ENCODE measurements at regions of chr6 and their contacts with region 1.

Region 1: GRCh38 chr6:110039364-110039980 is 61.4 kb downstream of the GPR6 start:
- DNase-seq: peak; percentile 88
- H3K4me3 Mint-ChIP-seq: peak overlapping the region; percentile 72
- H3K27ac Mint-ChIP-seq: peak overlapping the region; percentile 63
- H3K4me1 Mint-ChIP-seq: peaks cover 20% of the 10 kb centered on the region
- H3K27me3 Mint-ChIP-seq: no peaks in the 10 kb centered on the region

Region 2: GRCh38 chr6:109382576-109383437 is 656.7 kb before region 1 on chr6:
- CTCF ChIA-PET with region 1: interaction called, 7 read pairs
- POLR2A ChIA-PET with region 1: interaction called, 14 read pairs
- DNase-seq: peak; percentile 94
- H3K4me3 Mint-ChIP-seq: peak overlapping the region; percentile 93
- H3K27ac Mint-ChIP-seq: peak overlapping the region; percentile 99
- H3K4me1 Mint-ChIP-seq: peaks cover 28% of the 10 kb centered on the region
- H3K27me3 Mint-ChIP-seq: peaks cover 3% of the 10 kb centered on the region

Region 3: DNA sequence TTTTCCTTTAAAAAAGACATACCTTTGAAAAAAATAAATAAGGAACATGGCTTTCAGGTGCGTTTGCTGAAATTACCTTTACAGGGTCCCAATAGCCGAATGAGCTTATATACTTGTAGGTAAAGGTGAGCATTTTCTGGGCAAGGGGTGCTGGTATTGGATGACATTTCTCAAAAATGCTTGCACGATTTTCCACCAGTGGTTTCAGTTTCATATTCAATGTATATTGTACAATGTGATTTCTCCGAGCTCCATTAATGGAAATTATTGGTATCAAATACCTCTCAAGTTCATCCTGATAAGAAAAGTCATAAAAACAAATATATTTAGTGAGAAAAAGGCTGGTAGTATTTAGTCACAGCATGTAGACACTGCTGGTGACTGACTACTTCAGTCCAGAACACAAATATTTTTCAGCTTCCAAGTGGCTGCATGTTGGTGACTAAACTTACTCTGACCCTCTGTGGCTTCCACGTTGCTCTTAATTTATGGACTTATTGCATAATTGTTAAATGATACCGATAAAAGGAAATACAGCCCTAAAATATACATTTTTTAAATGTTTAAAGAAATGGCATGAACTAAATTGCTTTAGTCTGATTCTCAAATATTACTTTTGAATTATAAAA is 523.6 kb before region 1 on chr6:
- CTCF ChIA-PET with region 1: interaction called, 13 read pairs
- POLR2A ChIA-PET with region 1: interaction called, 4 read pairs
- DNase-seq: no peak
- H3K4me3 Mint-ChIP-seq: peak overlapping the region; percentile 59
- H3K27ac Mint-ChIP-seq: peak overlapping the region; percentile 33
- H3K4me1 Mint-ChIP-seq: peaks cover 35% of the 10 kb centered on the region
- H3K27me3 Mint-ChIP-seq: no peaks in the 10 kb centered on the region

Region 4: DNA sequence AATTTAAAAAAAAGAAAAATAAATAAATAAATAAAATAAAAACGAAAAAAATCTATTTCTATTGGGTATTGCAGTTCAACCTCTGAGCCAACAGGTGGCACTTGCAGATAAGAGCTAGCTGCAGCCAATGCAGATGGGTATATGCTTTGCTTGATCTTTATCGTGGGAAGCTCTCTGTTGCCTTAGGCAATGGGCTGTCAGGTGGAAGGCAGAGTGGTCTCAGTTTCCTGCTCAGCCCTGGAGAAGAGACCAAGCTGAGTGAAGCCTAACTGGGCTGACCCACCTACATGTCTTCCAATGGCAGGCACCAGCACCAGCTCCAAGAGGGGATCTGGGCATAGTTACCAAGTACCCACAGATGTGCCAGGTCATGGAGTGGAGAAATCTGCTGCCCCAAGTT is 443.5 kb before region 1 on chr6:
- CTCF ChIA-PET with region 1: interaction called, 15 read pairs
- POLR2A ChIA-PET with region 1: no interaction called
- DNase-seq: no peak
- H3K4me3 Mint-ChIP-seq: no peak overlapping the region
- H3K27ac Mint-ChIP-seq: no peak overlapping the region
- H3K4me1 Mint-ChIP-seq: no peaks in the 10 kb centered on the region
- H3K27me3 Mint-ChIP-seq: peaks cover 2% of the 10 kb centered on the region

Region 5: DNA sequence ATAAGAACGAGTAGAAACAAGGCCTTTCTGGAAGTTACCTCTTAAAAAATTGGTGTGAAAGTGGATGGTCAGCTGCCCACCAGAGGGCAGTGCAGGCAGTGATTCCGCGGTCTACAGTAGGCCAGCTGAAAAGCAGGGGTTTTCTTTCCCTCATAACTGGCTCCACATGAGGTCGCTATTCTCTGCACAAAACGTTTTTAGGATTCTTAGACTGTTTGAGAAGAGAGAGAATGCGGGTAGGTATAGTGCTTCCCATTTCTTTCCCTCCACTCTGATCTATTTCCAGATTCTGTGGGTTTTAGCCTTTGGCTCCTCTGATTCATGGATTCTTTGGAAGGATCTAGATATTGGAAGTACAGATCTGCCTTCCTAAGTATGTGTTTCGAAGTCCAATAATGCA is 334.2 kb before region 1 on chr6:
- CTCF ChIA-PET with region 1: interaction called, 142 read pairs
- POLR2A ChIA-PET with region 1: no interaction called
- DNase-seq: peak; percentile 81
- H3K4me3 Mint-ChIP-seq: no peak overlapping the region
- H3K27ac Mint-ChIP-seq: no peak overlapping the region
- H3K4me1 Mint-ChIP-seq: peaks cover 7% of the 10 kb centered on the region
- H3K27me3 Mint-ChIP-seq: no peaks in the 10 kb centered on the region

Region 6: DNA sequence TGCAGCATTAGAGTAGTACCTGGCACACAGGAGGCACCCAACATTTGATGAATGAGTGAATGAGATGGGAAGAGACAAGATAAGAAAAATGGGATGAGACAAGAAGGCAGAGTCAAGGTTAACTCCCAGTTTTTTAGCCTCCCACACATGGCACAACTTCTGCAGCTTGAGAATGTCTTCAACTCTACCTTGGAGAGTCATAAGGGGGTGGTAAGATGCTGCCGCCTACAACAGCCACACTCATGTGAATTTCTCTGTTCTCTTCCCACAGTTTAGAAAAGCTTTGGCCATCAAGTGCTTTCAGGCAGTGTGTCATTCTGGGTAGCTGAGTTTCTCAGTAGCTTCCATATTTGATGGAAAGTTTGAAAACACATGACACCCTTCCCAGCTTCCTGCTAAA is 80.8 kb before region 1 on chr6:
- CTCF ChIA-PET with region 1: no interaction called
- POLR2A ChIA-PET with region 1: no interaction called
- DNase-seq: no peak
- H3K4me3 Mint-ChIP-seq: no peak overlapping the region
- H3K27ac Mint-ChIP-seq: no peak overlapping the region
- H3K4me1 Mint-ChIP-seq: no peaks in the 10 kb centered on the region
- H3K27me3 Mint-ChIP-seq: peaks cover 10% of the 10 kb centered on the region

Region 7: GRCh38 chr6:110020888-110021287 is 18.6 kb before region 1 on chr6:
- CTCF ChIA-PET with region 1: interaction called, 16 read pairs
- POLR2A ChIA-PET with region 1: no interaction called
- DNase-seq: no peak
- H3K4me3 Mint-ChIP-seq: no peak overlapping the region
- H3K27ac Mint-ChIP-seq: no peak overlapping the region
- H3K4me1 Mint-ChIP-seq: peaks cover 12% of the 10 kb centered on the region
- H3K27me3 Mint-ChIP-seq: peaks cover 3% of the 10 kb centered on the region

Region 8: DNA sequence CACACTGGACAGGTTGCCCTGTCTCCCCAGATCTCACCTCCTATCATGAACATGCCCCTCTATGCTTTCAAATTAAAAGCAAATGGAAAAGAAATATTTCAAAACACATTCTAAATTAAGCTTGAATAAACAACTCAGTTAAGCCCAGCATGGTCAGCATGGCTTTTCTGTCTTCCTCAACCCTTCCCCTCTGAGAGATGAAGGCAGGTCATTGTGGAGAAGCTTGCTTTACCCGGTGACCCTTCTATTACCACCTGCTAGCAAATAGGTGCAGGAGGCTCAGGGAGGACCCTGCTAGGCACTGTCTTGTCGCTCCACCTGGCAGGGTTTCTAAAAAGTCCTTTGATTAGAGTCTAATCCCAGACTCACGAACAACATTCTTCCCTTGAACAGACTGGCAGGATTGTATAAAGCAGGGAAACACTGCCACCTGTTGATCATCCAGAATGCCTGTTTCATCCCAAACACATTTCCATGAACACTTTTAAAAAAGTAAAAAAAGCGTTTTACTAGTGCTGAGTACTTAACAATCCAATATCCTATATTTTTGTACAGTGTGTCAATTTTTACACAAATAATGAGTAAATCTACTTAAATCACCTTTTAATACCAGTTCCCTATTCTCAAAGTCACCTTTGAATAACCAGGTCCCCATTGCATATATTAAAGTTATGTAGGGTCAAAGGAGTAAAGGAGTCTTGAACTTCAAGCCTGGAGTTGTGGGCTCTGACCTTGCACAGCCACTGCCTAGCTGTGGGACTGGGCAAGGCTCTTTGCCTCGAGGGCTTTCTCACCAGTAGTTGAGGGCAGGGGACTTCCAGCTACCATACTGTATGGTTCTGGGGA is 14.1 kb after region 1 on chr6:
- CTCF ChIA-PET with region 1: interaction called, 22 read pairs
- POLR2A ChIA-PET with region 1: interaction called, 3 read pairs
- DNase-seq: no peak
- H3K4me3 Mint-ChIP-seq: no peak overlapping the region
- H3K27ac Mint-ChIP-seq: no peak overlapping the region
- H3K4me1 Mint-ChIP-seq: no peaks in the 10 kb centered on the region
- H3K27me3 Mint-ChIP-seq: peaks cover 23% of the 10 kb centered on the region